Activated naive CD8-positive, alpha-beta T cell treated with anti-CD3 and anti-CD28 coated beads, Interleukin-2, amount 10 ng/mL, durations not matched to agents 7 days and 5 days (primary cell): ENCODE measurements at regions of chr12 and their contacts with region 1.

Region 1: DNA sequence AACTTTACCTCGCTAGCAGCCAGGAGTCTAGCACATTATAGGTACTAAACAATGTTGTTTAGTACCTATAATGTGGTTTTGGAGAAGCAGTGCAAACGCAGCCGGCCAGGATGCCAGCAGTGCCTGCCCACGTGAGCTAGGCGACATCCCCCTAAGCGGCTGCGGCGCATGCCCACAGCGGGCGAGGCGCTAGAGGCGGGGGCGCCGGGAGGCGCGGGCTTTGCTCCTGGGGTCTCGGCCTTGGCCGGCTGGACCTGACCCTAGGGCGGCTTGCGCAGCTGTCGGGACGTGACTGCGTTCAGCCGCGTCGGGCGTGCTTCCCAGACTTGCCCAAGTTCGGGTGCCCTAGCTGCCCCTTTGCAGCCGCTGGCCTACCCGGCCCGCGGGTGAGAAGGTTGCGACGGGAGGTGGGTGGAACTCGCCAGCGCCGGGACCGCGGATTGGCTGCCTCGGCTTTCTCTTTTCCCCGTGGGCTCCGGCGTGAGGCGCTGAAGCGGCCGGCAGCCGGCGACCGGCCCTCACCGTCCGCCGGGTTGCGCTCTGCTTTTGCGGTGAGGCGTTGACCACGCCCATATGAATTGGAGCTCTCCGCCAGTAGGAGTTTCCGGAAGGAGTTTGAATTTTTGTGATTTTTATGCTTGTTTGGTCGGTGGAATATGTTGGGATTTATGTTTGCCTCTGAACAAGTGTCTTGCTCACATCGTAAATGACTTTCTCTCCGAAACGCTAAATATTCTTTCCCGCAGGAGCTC is at the start of gene TMEM19:
- DNase-seq: peak; percentile 87
- ATAC-seq: peak; percentile 95
- H3K4me3 Mint-ChIP-seq: peak within 1 kb of the TSS; percentile 98
- H3K27ac Mint-ChIP-seq: peak within 1 kb of the TSS; percentile 98
- H3K4me1 Mint-ChIP-seq: peaks cover 18% of the 10 kb centered on the region
- H3K27me3 Mint-ChIP-seq: no peaks in the 10 kb centered on the region
- total RNA-seq, gene TMEM19: 17.0 to 18.5 TPM

Region 2: DNA sequence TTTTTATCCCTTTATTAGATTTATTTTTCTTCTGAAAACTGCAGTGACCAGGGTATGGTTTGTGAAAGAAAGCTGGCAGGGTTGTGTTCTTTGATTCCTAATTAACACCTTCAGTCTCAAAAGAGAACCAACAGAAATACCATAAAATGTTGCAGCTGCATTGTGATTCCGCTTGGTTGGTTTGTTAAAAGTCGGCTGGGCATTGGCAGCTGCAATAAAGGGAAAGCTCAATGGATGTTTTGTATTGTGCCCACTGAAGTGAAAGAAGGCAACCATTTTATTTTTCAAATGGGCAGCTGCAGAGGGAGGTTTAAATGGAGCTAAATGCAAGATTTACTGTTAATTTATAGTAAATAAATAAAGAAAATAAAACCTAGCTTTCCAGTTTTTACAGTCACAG is 229.8 kb before region 1 on chr12:
- POLR2A ChIA-PET with region 1: no interaction called
- DNase-seq: no peak
- ATAC-seq: no peak
- H3K4me3 Mint-ChIP-seq: no peak overlapping the region
- H3K27ac Mint-ChIP-seq: no peak overlapping the region
- H3K4me1 Mint-ChIP-seq: no peaks in the 10 kb centered on the region
- H3K27me3 Mint-ChIP-seq: peaks cover 20% of the 10 kb centered on the region

Region 3: DNA sequence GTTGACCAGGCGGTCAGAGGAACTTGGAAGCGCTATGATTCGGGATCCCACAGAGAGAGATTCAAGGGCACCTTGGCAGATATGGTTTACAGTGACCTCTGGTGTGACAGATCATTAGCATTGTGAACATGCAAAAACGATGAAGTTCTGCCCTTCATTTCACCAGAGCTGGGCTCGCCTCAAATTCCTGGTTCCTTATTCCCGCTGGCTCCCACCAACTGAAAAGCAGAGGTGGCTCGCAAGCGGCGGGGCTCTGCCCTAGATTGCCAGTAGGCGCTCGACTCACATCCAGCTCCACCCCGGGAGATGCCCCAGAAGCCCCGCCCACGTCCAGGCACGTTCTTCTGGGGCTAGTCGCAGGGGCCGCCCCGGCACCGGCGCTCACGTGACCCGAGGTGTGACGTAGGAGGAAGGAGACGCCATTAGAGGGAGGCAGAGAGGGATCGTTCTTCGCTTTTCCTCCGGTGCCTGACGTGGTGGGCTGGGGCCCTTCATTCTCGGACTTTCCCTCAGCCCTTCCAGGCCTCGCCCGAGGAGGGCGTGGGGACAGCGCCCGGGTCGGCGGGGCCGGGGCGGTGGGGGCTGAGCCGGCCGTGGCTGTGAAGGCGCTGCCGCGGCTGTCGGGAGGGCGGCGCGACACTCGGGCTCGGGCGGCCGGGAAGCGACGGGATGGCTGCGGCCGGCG is 68.5 kb after region 1 on chr12 and contains the start of gene RAB21:
- POLR2A ChIA-PET with region 1: interaction called, 13 read pairs
- DNase-seq: peak; percentile 98
- ATAC-seq: peak; percentile 95
- H3K4me3 Mint-ChIP-seq: peak within 1 kb of the TSS; percentile 93
- H3K27ac Mint-ChIP-seq: peak within 1 kb of the TSS; percentile 94
- H3K4me1 Mint-ChIP-seq: peaks cover 22% of the 10 kb centered on the region
- H3K27me3 Mint-ChIP-seq: peaks cover 22% of the 10 kb centered on the region
- total RNA-seq, gene RAB21: 63.8 to 66.3 TPM

Region 4: DNA sequence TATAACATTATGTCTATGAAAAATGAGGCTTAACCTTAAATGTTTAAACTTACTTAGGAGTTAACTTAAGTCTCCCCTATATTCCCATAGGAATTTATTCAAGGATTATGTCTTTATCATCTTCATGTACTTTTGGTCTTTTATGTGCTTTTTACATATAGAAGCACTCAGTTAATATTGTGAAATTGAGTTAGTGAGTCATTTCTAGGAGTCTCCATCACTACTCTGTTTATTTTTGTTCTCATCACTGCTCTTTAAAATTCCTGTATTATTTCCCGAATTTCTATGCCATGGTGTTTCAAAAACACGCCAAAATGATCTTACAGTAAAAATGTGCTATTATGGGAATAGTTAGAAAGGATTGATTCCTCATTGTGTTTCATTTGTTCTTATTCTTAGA is 185.0 kb after region 1 on chr12:
- POLR2A ChIA-PET with region 1: no interaction called
- DNase-seq: no peak
- ATAC-seq: no peak
- H3K4me3 Mint-ChIP-seq: no peak overlapping the region
- H3K27ac Mint-ChIP-seq: no peak overlapping the region
- H3K4me1 Mint-ChIP-seq: peaks cover 11% of the 10 kb centered on the region
- H3K27me3 Mint-ChIP-seq: no peaks in the 10 kb centered on the region